ENCODE measurements at regions of chr9 and their contacts with region 1.

Region 1: GRCh38 chr9:109469646-109470358 is 28.3 kb downstream of the PTPN3 start:
- DNase-seq: peak; percentile 63
- H3K4me3 Mint-ChIP-seq: no peak overlapping the region
- H3K27ac Mint-ChIP-seq: peak overlapping the region; percentile 34
- H3K4me1 Mint-ChIP-seq: peaks cover 47% of the 10 kb centered on the region
- H3K27me3 Mint-ChIP-seq: peaks cover 19% of the 10 kb centered on the region

Region 2: GRCh38 chr9:109101810-109102209 is 368.0 kb before region 1 on chr9:
- intact Hi-C with region 1: loop called (anchors 5 kb)
- DNase-seq: peak; percentile 14
- H3K4me3 Mint-ChIP-seq: peak overlapping the region; percentile 46
- H3K27ac Mint-ChIP-seq: peak overlapping the region; percentile 73
- H3K4me1 Mint-ChIP-seq: peaks cover 65% of the 10 kb centered on the region
- H3K27me3 Mint-ChIP-seq: no peaks in the 10 kb centered on the region

Region 3: GRCh38 chr9:109244157-109245132 is 225.4 kb before region 1 on chr9:
- intact Hi-C with region 1: loop called (anchors 1 kb)
- DNase-seq: peak; percentile 42
- H3K4me3 Mint-ChIP-seq: no peak overlapping the region
- H3K27ac Mint-ChIP-seq: no peak overlapping the region
- H3K4me1 Mint-ChIP-seq: no peaks in the 10 kb centered on the region
- H3K27me3 Mint-ChIP-seq: peaks cover 29% of the 10 kb centered on the region

Region 4: DNA sequence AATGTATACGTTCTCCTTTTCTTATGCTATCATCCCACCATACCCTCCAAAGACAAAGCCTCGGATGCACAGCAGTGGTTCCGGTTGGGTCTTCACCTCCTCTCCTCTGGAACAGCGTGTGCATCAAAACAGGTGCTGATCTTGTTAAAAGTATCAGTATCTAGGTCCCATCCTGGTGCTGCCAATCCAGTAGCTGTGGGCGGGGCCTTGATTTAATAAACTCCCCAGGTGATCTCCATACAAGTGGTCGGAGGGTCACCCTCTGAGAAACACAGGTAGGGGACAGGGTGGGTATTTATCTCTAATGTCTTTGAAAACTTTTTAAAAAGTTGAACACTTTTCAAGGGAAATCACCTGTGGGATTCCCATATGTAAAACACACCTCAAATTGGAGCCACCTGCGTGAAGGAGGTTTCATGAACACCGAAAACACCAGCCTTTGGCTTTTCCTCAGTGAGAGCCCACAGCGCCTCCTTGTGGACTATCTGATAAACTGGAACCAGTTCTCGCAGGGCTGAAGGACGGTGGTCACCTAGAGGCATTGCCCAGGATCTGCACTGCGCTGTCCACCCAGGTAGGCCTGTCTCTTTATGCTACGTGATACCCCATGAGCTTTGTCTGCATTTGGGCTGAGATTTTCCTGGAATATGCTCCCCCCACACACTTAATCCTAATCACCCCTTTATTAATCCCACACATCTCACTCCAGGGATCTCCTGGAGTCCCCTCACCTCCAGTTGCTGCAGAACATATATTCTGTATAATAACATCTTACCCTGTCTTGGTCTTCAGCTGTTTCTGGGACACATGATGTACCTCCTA is 68.4 kb before region 1 on chr9:
- intact Hi-C with region 1: loop called (anchors 1 kb)
- DNase-seq: no peak
- H3K4me3 Mint-ChIP-seq: peak overlapping the region; percentile 19
- H3K27ac Mint-ChIP-seq: peak overlapping the region; percentile 74
- H3K4me1 Mint-ChIP-seq: peaks cover 45% of the 10 kb centered on the region
- H3K27me3 Mint-ChIP-seq: peaks cover 8% of the 10 kb centered on the region

Region 5: GRCh38 chr9:109430231-109430630 is 39.6 kb before region 1 on chr9:
- intact Hi-C with region 1: loop called (anchors 5 kb)
- DNase-seq: no peak
- H3K4me3 Mint-ChIP-seq: no peak overlapping the region
- H3K27ac Mint-ChIP-seq: no peak overlapping the region
- H3K4me1 Mint-ChIP-seq: no peaks in the 10 kb centered on the region
- H3K27me3 Mint-ChIP-seq: peaks cover 12% of the 10 kb centered on the region

Region 6: GRCh38 chr9:109447329-109448076 is 22.3 kb before region 1 on chr9:
- intact Hi-C with region 1: loop called (anchors 1 kb)
- DNase-seq: peak; percentile 31
- H3K4me3 Mint-ChIP-seq: peak overlapping the region; percentile 28
- H3K27ac Mint-ChIP-seq: peak overlapping the region; percentile 89
- H3K4me1 Mint-ChIP-seq: peaks cover 40% of the 10 kb centered on the region
- H3K27me3 Mint-ChIP-seq: peaks cover 3% of the 10 kb centered on the region

Measured in activated T-helper 1 cell treated with anti-CD3 and anti-CD28 coated beads, Interleukin-12 subunit alpha, Interleukin-12 subunit beta, Interleukin-2, Interleukin-4 antibody, amounts not matched to agents 30 ng/mL and 10 ng/mL and 1 ng/mL, durations not matched to agents 14 hours and 24 hours and 36 hours (primary cell).